ENCODE measurements at regions of chr7 and their contacts with region 1.

Region 1: DNA sequence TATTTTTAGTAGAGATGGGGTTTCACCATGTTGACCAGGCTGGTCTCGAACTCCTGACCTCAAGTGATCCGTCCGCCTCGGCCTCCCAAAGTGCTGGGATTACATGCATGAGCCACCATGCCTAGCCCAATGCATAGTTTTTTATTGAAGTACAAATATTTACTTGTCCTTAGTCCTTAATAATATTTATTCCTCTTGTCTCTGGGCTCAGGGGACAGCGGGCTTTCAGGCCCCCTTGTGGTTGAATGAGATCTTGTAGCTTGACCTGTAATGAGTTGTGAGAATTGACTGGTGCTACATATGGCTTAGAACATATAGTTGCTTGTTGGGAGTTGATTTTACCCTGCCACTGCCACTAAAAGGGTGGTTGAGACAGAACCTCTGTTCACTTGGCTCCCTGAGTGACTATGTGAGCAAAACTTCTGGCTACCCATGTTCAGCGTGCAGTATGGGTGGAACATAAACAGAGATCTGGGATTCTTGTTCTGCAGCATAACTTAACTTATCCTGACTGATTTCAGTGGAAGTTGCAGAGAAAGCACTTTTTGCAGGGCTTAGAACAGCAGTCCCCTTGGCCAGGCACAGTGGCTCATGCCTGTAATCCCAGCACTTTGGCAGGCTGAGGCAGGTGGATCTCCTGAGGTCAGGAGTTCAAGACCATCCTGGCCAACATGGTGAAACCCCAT is 14.9 kb downstream of the CCL26 start:
- DNase-seq: no peak
- H3K4me3 ChIP-seq: no peak overlapping the region
- H3K27ac ChIP-seq: no peak overlapping the region
- H3K4me1 ChIP-seq: no peaks in the 10 kb centered on the region
- H3K27me3 ChIP-seq: no peaks in the 10 kb centered on the region
- CTCF ChIP-seq: peak; percentile 9 to 27 (median 26)
- POLR2A ChIP-seq: no peak

Region 2: GRCh38 chr7:75546237-75547015 is 210.7 kb before region 1 on chr7:
- intact Hi-C with region 1: loop called (anchors 10 kb)
- DNase-seq: no peak
- H3K4me3 ChIP-seq: no peak overlapping the region
- H3K27ac ChIP-seq: no peak overlapping the region
- H3K4me1 ChIP-seq: no peaks in the 10 kb centered on the region
- H3K27me3 ChIP-seq: no peaks in the 10 kb centered on the region
- CTCF ChIP-seq: no peak
- POLR2A ChIP-seq: no peak